ENCODE measurements at regions of chr7 and their contacts with region 1.

Region 1: DNA sequence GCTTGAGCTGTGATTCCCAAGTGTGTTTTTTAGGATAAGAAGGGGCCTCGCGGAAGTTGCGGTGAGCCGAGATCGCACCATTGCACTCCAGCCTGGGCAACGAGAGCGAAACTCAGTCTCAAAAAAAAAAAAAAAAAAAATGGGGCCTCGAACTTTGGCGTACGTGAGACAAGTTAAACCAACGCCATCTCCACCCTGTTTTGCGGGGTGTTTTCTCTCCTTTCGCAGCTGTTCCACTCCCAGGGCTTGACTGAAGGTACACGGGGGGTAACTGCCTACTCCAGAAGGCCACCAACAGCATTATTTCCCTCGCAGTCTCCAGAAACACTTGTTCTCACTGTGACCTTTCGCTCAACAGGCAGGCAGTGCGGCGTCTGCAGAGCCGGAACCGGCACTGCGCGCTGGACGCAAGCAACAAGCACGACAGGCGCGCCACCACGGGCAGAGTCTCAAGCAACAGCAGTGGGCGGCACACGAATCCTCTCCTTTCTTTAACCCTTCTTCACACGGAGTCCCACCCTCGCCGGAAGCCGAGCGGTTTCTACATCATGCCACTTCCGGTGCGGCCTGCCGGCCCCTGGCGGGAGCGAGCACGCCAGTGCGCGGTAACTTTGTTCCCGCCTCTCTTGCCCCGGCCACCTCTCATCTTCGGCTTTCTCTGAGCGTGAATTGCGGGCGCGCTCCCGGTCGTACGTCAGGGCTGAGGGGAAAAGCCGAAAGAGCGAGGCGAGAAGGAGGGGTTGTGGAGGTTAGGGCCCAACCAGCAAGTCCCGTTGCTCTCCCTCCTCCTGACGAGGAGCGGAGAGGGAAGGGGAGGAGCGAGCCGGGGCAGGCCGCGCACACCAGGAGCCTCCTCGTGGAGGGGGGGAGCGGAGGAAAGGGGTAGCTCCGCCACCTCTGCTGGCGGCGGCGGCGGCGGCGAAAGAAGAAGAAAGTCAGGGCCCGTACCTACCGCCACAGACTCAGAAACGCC is 814 bp upstream of the CDK13 start:
- DNase-seq: peak; percentile 88 to 98 (median 91)
- ATAC-seq: peak; percentile 84
- H3K4me3 ChIP-seq: peak overlapping the region; percentile 72
- H3K27ac ChIP-seq: peak overlapping the region; percentile 96
- H3K4me1 ChIP-seq: peaks cover 9 to 24% of the 10 kb centered on the region in 2 experiments
- H3K27me3 ChIP-seq: no peaks in the 10 kb centered on the region
- CTCF ChIP-seq: 0 out of 6 replicates have a peak, but pooled peaks of 1 of the 3 experiments have one; percentile 8
- EP300 ChIP-seq: peak; percentile 11; the same call in 1 of the 2 replicates
- POLR2A ChIP-seq: peak; percentile 97
- RAD21 ChIP-seq: no peak

Region 2: DNA sequence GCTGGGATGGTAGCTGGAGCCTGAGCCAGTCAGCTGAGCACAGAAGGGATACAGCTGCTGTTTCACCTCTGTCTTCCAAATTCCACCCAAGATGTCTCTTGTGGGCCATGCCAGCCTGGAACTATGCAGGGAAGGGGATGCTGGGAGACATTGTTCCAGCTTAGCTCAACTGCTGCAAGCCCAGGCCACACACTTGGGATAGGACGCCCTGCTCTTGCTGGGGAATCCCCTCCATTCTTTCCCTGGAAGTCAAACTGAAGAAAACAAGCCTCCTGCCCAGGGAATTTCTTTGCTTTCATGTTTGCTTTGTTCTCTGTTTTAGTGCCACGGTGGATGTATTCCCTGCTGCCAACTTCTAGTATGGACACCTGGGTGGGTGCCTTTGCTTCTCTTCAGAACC is 54.3 kb before region 1 on chr7:
- CTCF ChIA-PET with region 1: no interaction called
- POLR2A ChIA-PET with region 1: interaction called, 3 read pairs
- in situ Hi-C with region 1: no loop called
- intact Hi-C with region 1: loop called (anchors 1 kb)
- DNase-seq: no peak
- ATAC-seq: no peak
- H3K4me3 ChIP-seq: no peak overlapping the region
- H3K27ac ChIP-seq: no peak overlapping the region
- H3K4me1 ChIP-seq: no peaks in the 10 kb centered on the region
- H3K27me3 ChIP-seq: peaks cover 2 to 25% of the 10 kb centered on the region in 2 experiments; a peak in 4 of 5 replicates
- CTCF ChIP-seq: no peak
- EP300 ChIP-seq: no peak
- POLR2A ChIP-seq: no peak
- RAD21 ChIP-seq: no peak

Region 3: DNA sequence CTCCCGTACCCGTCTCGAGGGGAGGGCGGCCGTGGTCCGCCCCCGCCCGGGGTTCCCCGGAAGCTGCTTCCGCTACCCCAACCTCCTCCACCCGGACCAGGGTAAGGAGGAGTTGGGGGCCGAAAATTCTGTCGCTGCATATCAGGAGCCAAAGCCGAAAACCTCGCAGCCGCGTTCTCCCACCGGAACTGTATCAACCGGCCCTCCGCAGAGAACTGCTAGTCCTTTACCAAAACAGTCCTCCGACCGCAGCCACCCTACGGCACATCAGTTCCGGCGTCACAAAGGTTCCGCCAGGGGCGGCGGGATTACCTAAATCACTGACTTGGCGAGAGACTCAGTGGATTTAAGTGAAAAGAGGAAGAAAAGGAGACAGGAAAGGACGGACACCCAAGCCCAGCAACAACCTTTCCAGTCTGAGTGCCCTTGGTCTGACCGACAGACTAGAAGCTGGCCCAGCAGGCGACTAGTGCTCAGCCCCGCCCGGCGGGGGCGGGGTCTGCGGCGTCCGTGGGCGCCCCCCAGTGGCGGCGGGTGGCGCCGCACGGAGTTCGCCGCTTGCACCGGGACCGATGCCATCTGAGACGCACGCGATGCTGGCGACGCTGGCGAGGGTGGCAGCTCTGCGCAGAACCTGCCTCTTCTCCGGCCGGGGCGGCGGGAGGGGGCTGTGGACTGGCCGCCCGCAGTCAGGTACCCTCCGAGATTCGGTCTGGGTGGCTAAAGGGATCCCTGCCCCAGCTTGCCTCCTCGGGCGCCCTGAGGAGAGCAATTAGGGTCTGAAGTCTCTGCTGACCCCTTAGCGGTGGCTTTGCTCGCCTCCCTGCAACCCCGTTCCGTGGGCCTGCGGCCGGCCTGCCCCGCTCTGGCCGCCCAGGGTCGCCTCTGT is 185.4 kb after region 1 on chr7 and contains the starts of genes MPLKIP and SUGCT:
- CTCF ChIA-PET with region 1: no interaction called
- POLR2A ChIA-PET with region 1: no interaction called
- in situ Hi-C with region 1: no loop called
- intact Hi-C with region 1: loop called (anchors 5 kb)
- DNase-seq: peak; percentile 89 to 92 (median 90)
- ATAC-seq: peak; percentile 92
- H3K4me3 ChIP-seq: peak within 1 kb of the TSS; percentile 95
- H3K27ac ChIP-seq: peak within 1 kb of the TSS; percentile 98
- H3K4me1 ChIP-seq: peaks cover 0 to 6% of the 10 kb centered on the region in 2 experiments; a peak in 2 of 5 replicates
- H3K27me3 ChIP-seq: no peaks in the 10 kb centered on the region
- CTCF ChIP-seq: peak; percentile 87 to 94 (median 88)
- EP300 ChIP-seq: peak; percentile 19; the same call in 1 of the 2 replicates
- POLR2A ChIP-seq: peak; percentile 90
- RAD21 ChIP-seq: peak; percentile 31 to 44; a peak in 3 of 4 replicates
- polyA plus RNA-seq, gene MPLKIP: 5.6 to 12.3 TPM
- polyA plus RNA-seq, gene SUGCT: 0.58 to 1.3 TPM

Measured in K562 (cell line).